ENCODE measurements at regions of chr17 and their contacts with region 1.

Region 1: GRCh38 chr17:31321481-31321880 is at the start of gene EVI2A:
- DNase-seq: peak; percentile 30 to 95 (median 87)
- ATAC-seq: peak; percentile 93
- H3K4me3 ChIP-seq: peak within 1 kb of the TSS; percentile 66
- H3K4me3 Mint-ChIP-seq: peak within 1 kb of the TSS; percentile 78 to 96 (median 89)
- H3K27ac ChIP-seq: peak within 1 kb of the TSS; percentile 90
- H3K27ac Mint-ChIP-seq: peak within 1 kb of the TSS; percentile 88 to 98 (median 94)
- H3K4me1 ChIP-seq: peaks cover 11 to 28% of the 10 kb centered on the region in 2 donors
- H3K4me1 Mint-ChIP-seq: peaks cover 26 to 41% (median 34%) of the 10 kb centered on the region in 7 donors
- H3K27me3 ChIP-seq: no peaks in the 10 kb centered on the region
- H3K27me3 Mint-ChIP-seq: no peaks in the 10 kb centered on the region
- total RNA-seq, gene EVI2A: 40.9 to 134 (median 60.2) TPM

Region 2: DNA sequence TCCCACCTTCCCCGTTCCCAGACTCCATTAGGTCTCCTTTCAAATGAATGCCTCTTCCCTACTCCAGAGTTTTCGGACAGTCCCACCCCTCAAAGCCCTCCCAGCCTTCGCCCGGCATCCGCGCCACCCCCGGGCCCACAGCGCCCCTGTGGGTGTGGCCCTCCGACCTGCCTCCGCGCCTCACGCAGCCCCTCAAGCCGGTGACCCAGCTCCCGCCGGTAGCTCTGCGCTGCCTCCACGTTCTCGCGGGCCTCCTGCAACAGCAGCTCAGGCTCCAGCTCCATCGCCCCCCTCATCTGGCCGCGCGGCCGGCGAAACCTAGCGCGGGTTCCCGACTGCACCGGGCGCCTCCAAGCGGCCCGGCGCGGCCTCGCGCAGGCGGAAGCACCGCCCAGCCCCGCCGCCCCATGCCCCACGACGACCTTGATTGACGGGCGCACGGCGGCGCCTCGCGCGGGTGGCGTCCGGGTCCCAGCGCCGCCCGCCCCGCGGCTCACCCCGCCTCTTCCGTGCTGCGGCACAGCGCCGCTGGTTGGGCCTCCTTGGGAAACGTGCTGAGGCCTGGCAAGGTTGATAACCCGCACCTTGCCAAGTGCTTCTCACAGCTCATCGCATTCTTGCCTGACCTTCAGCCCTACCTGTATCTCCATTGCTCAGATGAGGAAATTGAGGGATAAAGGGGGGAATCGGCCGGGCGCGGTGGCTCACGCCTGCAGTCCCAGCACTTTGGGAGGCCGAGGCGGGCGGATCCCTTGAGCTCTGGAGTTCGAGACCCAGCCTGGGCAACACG is 496.9 kb before region 1 on chr17 and contains the start of gene CRLF3:
- CTCF ChIA-PET with region 1: no interaction called
- POLR2A ChIA-PET with region 1: no interaction called
- intact Hi-C with region 1: loop called in 1 of 2 experiments (anchors 5 kb)
- DNase-seq: peak; percentile 88 to 94 (median 92)
- ATAC-seq: peak; percentile 97
- H3K4me3 ChIP-seq: peak within 1 kb of the TSS; percentile 62
- H3K4me3 Mint-ChIP-seq: peak within 1 kb of the TSS; percentile 92 to 100 (median 98)
- H3K27ac ChIP-seq: peak within 1 kb of the TSS; percentile 91
- H3K27ac Mint-ChIP-seq: peak within 1 kb of the TSS; percentile 84 to 99 (median 91)
- H3K4me1 ChIP-seq: peaks cover 23 to 25% of the 10 kb centered on the region in 2 donors
- H3K4me1 Mint-ChIP-seq: peaks cover 25 to 42% (median 36%) of the 10 kb centered on the region in 7 donors
- H3K27me3 ChIP-seq: no peaks in the 10 kb centered on the region
- H3K27me3 Mint-ChIP-seq: no peaks in the 10 kb centered on the region
- total RNA-seq, gene CRLF3: 65.5 to 142 (median 86.7) TPM

Region 3: DNA sequence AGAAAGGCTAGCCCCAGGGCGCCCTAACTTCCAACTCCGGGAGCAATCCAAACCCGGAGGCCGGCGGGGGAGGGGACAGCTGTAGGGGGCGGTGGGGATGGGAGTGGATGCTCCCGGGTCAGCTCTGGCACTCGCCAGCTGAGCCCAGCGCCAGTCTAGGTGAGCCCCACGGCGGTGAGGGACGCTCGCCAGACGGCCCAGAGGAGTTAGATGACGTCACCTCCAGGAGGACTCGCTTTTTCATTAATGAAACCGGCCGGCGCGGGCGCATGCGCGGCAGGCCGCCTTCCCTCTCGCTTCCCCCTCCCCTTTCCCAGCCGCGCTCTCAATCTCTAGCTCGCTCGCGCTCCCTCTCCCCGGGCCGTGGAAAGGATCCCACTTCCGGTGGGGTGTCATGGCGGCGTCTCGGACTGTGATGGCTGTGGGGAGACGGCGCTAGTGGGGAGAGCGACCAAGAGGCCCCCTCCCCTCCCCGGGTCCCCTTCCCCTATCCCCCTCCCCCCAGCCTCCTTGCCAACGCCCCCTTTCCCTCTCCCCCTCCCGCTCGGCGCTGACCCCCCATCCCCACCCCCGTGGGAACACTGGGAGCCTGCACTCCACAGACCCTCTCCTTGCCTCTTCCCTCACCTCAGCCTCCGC is 226.8 kb before region 1 on chr17 and contains the start of gene NF1:
- CTCF ChIA-PET with region 1: no interaction called
- POLR2A ChIA-PET with region 1: no interaction called
- intact Hi-C with region 1: loop called in 1 of 2 experiments (anchors 10 kb)
- DNase-seq: peak; percentile 57 to 86 (median 72)
- ATAC-seq: peak; percentile 88
- H3K4me3 ChIP-seq: peak within 1 kb of the TSS; percentile 71
- H3K4me3 Mint-ChIP-seq: peak within 1 kb of the TSS; percentile 83 to 98 (median 94)
- H3K27ac ChIP-seq: peak within 1 kb of the TSS; percentile 76
- H3K27ac Mint-ChIP-seq: peak within 1 kb of the TSS; percentile 80 to 97 (median 92)
- H3K4me1 ChIP-seq: peaks cover 0 to 8% of the 10 kb centered on the region in 2 donors
- H3K4me1 Mint-ChIP-seq: peaks cover 10 to 22% (median 13%) of the 10 kb centered on the region in 7 donors
- H3K27me3 ChIP-seq: no peaks in the 10 kb centered on the region
- H3K27me3 Mint-ChIP-seq: no peaks in the 10 kb centered on the region
- total RNA-seq, gene NF1: 18.8 to 32.4 (median 21.2) TPM

Region 4: GRCh38 chr17:31195305-31195704 is 126.2 kb before region 1 on chr17:
- CTCF ChIA-PET with region 1: no interaction called
- POLR2A ChIA-PET with region 1: no interaction called
- intact Hi-C with region 1: no loop called
- DNase-seq: no peak
- ATAC-seq: no peak
- H3K4me3 ChIP-seq: no peak overlapping the region
- H3K4me3 Mint-ChIP-seq: no peak overlapping the region
- H3K27ac ChIP-seq: no peak overlapping the region
- H3K27ac Mint-ChIP-seq: no peak overlapping the region
- H3K4me1 ChIP-seq: no peaks in the 10 kb centered on the region
- H3K4me1 Mint-ChIP-seq: peaks cover 0 to 4% (median 0%) of the 10 kb centered on the region in 7 donors
- H3K27me3 ChIP-seq: no peaks in the 10 kb centered on the region
- H3K27me3 Mint-ChIP-seq: no peaks in the 10 kb centered on the region

Region 5: GRCh38 chr17:31286587-31286986 is 34.9 kb before region 1 on chr17:
- CTCF ChIA-PET with region 1: no interaction called
- POLR2A ChIA-PET with region 1: interaction called, 5 read pairs
- intact Hi-C with region 1: loop called in 1 of 2 experiments (anchors 5 kb)
- DNase-seq: no peak
- ATAC-seq: no peak
- H3K4me3 ChIP-seq: no peak overlapping the region
- H3K4me3 Mint-ChIP-seq: no peak overlapping the region
- H3K27ac ChIP-seq: no peak overlapping the region
- H3K27ac Mint-ChIP-seq: peak overlapping the region in 3 of 9 donors; percentile 34 to 71 (median 66)
- H3K4me1 ChIP-seq: no peaks in the 10 kb centered on the region
- H3K4me1 Mint-ChIP-seq: peaks cover 8 to 41% (median 36%) of the 10 kb centered on the region in 7 donors
- H3K27me3 ChIP-seq: no peaks in the 10 kb centered on the region
- H3K27me3 Mint-ChIP-seq: no peaks in the 10 kb centered on the region

Region 6: GRCh38 chr17:31357091-31357490 is 35.6 kb after region 1 on chr17:
- CTCF ChIA-PET with region 1: no interaction called
- POLR2A ChIA-PET with region 1: no interaction called
- intact Hi-C with region 1: no loop called
- DNase-seq: no peak
- ATAC-seq: no peak
- H3K4me3 ChIP-seq: no peak overlapping the region
- H3K4me3 Mint-ChIP-seq: no peak overlapping the region
- H3K27ac ChIP-seq: no peak overlapping the region
- H3K27ac Mint-ChIP-seq: no peak overlapping the region
- H3K4me1 ChIP-seq: no peaks in the 10 kb centered on the region
- H3K4me1 Mint-ChIP-seq: no peaks in the 10 kb centered on the region
- H3K27me3 ChIP-seq: no peaks in the 10 kb centered on the region
- H3K27me3 Mint-ChIP-seq: no peaks in the 10 kb centered on the region

Region 7: DNA sequence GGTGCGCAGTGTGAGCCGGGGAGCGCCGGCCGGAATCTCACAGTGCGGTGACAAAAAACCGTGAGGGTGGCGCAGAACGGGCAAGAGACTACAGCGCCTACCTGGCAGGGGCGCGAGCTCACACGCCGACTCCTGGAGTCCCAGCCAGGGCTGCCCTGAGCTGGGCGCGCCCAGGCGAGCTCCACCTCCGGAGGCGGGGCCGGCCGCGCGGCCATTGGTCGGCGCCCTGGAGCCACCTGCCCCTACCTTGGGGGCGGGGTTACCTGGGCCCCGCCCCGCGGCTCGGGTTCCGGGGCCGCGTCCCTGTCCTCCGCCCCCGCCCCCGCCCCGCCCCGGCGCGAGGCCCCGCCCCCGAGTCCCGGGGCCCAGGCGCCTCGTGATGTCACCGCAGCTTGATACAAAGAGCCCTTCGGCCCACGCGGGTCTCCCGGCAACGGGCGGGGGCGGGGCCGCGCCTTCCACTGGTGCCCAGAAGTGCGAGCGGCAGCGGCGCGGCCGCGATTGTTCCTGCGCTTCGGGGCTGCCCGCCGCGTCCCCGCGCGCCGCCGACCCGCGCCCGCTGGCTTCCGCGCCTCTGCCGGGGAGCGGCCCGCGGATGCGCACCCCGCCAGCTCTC is 166.3 kb after region 1 on chr17:
- CTCF ChIA-PET with region 1: no interaction called
- POLR2A ChIA-PET with region 1: interaction called, 12 read pairs
- intact Hi-C with region 1: loop called in 1 of 2 experiments (anchors 2 kb)
- DNase-seq: peak; percentile 88 to 95 (median 92)
- ATAC-seq: peak; percentile 94
- H3K4me3 ChIP-seq: peak overlapping the region; percentile 79
- H3K4me3 Mint-ChIP-seq: peak overlapping the region; percentile 85 to 98 (median 92)
- H3K27ac ChIP-seq: peak overlapping the region; percentile 90
- H3K27ac Mint-ChIP-seq: peak overlapping the region; percentile 78 to 98 (median 94)
- H3K4me1 ChIP-seq: peaks cover 40 to 43% of the 10 kb centered on the region in 2 donors
- H3K4me1 Mint-ChIP-seq: peaks cover 44 to 52% (median 48%) of the 10 kb centered on the region in 7 donors
- H3K27me3 ChIP-seq: no peaks in the 10 kb centered on the region
- H3K27me3 Mint-ChIP-seq: peaks cover 0 to 9% (median 0%) of the 10 kb centered on the region in 5 donors

Region 8: DNA sequence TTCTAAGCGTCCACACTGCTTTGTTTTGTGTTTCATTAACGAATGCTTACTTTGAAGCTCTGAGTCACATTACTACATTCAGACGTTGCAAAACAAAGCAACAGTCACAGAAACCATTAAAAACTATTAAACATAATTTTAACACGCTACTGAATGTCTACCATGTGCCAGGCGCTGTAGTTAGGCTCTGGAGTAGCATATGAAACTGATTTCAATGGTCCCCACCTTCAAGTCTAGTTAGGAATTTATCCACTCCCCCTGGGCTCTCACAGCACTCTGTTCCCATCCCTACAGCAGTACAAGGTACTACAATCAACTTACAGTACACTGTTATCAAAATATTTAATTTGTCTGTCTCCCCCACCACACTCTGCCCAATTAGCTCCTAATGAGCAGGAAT is 579.4 kb after region 1 on chr17:
- CTCF ChIA-PET with region 1: no interaction called
- POLR2A ChIA-PET with region 1: no interaction called
- intact Hi-C with region 1: loop called in 1 of 2 experiments (anchors 1 kb)
- DNase-seq: peak in 1 of 9 donors; percentile 9
- ATAC-seq: no peak
- H3K4me3 ChIP-seq: peak overlapping the region; percentile 80
- H3K4me3 Mint-ChIP-seq: no peak overlapping the region
- H3K27ac ChIP-seq: peak overlapping the region; percentile 81
- H3K27ac Mint-ChIP-seq: no peak overlapping the region
- H3K4me1 ChIP-seq: peaks cover 0 to 10% of the 10 kb centered on the region in 2 donors
- H3K4me1 Mint-ChIP-seq: peaks cover 0 to 25% (median 9%) of the 10 kb centered on the region in 7 donors
- H3K27me3 ChIP-seq: no peaks in the 10 kb centered on the region
- H3K27me3 Mint-ChIP-seq: no peaks in the 10 kb centered on the region